Sciatic nerve (tissue), 2 donors: ENCODE measurements at regions of chr10 and their contacts with region 1.

Region 1: GRCh38 chr10:33441561-33441960 is 107.1 kb upstream of the NRP1 start:
- DNase-seq: no peak
- ATAC-seq: no peak

Region 2: GRCh38 chr10:33381451-33382242 is 59.9 kb before region 1 on chr10:
- intact Hi-C with region 1: loop called (anchors 2 kb)
- DNase-seq: no peak
- ATAC-seq: peak; percentile 77

Region 3: GRCh38 chr10:33460505-33461294 is 19.1 kb after region 1 on chr10:
- intact Hi-C with region 1: no loop called
- DNase-seq: no peak
- ATAC-seq: peak; percentile 76

Region 4: DNA sequence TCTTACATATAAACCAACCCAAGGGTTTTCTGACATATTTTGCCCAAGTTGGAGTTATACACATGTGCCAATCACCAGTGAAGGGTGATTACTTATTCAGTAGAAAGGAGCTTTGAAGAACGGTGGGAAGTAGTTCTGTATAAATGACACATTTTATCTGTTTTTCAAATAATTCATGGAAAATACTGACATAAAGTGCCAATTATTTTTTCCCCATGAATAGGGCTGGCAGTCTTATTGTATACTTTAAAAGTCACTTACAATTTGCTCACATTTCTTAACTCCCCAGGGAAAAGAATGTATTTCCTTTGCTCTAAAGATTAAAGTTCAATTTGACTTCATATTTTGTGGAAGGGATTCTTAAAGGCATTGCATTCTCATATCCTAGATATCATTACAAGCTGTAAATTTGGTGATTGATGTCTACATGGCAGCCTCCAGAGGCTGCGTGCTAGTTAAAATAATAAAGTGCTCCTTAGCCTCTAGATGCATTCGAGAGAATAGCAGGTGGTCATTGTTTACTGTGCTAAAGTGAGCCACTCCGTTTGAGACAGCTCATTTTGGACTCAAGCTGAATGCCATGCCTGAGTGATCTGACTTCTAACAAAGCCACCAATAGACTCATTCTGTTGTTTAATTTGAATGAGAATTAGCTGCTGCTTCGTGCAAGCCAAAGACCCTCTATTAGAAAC is 41.7 kb after region 1 on chr10:
- intact Hi-C with region 1: no loop called
- DNase-seq: no peak
- ATAC-seq: no peak

Region 5: GRCh38 chr10:33509231-33509831 is 67.8 kb after region 1 on chr10:
- intact Hi-C with region 1: no loop called
- DNase-seq: no peak
- ATAC-seq: peak; percentile 88